Ovary (tissue), 10 donors: ENCODE measurements at regions of chr5 and their contacts with region 1.

Region 1: DNA sequence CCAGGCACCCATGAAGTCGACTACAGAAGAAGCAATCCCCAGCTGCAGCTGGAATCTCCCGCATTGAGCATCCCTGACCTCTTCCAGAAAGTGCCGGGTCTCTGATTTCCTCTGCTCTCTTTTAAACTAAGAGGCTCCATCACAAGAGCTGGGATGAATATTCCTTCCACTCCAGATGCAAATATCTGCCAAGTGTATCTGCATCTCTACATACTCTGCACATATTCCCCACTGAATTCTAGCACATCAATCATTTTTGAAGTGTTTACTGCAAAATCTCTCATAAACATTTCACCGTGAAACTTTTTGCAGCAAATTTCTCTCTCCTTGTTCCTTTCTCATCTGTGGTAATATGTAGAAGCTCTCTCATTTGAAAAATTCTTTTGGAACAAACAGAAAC is 161.5 kb downstream of the GABRB2 start:
- DNase-seq: no peak
- H3K4me3 ChIP-seq: no peak overlapping the region
- H3K27ac ChIP-seq: no peak overlapping the region
- H3K4me1 ChIP-seq: no peaks in the 10 kb centered on the region
- H3K27me3 ChIP-seq: no peaks in the 10 kb centered on the region
- CTCF ChIP-seq: no peak
- EP300 ChIP-seq: no peak
- POLR2A ChIP-seq: no peak

Region 2: DNA sequence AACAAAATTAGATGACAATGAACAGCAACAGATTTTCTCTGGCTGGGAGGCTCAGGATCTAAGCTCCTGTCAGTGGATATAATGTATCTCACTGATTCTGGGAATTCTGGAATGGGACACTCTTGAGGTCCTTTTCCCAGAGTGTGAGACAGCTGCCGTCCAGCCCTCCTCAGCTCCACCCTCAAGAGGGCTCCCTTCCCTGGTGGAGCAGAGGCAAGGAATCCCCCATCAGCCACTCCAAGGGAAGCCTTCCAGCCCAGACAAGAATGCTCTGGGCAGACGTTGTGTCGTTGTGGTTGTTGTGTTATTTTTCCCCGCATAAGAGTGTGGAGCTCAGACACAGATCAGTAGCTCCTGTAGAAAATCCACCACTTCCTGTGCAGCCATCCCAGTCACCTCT is 485.3 kb before region 1 on chr5:
- intact Hi-C with region 1: loop called in 1 of 4 experiments (anchors 5 kb)
- DNase-seq: no peak
- H3K4me3 ChIP-seq: no peak overlapping the region
- H3K27ac ChIP-seq: no peak overlapping the region
- H3K4me1 ChIP-seq: no peaks in the 10 kb centered on the region
- H3K27me3 ChIP-seq: no peaks in the 10 kb centered on the region
- CTCF ChIP-seq: no peak
- EP300 ChIP-seq: no peak
- POLR2A ChIP-seq: no peak

Region 3: DNA sequence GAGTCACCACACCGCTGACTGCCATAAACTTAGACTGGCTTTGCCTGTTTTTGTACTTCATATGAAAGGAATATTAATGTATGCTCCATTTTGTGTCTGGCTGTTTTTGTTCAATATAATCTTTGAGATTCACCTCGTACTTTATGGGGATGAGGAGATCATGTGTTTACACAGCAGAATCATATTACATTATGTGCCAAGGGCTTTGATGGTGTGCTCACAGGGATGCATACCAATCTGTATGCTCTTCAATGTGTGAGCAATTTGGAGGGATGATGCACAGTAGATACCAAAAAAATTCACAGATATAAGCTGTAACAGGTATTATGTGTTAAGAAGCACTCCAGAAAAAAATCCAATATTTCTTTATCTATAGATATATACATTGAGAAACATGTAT is 47.8 kb after region 1 on chr5:
- intact Hi-C with region 1: no loop called
- DNase-seq: no peak
- H3K4me3 ChIP-seq: no peak overlapping the region
- H3K27ac ChIP-seq: no peak overlapping the region
- H3K4me1 ChIP-seq: no peaks in the 10 kb centered on the region
- H3K27me3 ChIP-seq: no peaks in the 10 kb centered on the region
- CTCF ChIP-seq: no peak
- EP300 ChIP-seq: no peak
- POLR2A ChIP-seq: no peak

Region 4: GRCh38 chr5:161446655-161447054 is 61.6 kb after region 1 on chr5:
- intact Hi-C with region 1: no loop called
- DNase-seq: no peak
- H3K4me3 ChIP-seq: no peak overlapping the region
- H3K27ac ChIP-seq: no peak overlapping the region
- H3K4me1 ChIP-seq: no peaks in the 10 kb centered on the region
- H3K27me3 ChIP-seq: no peaks in the 10 kb centered on the region
- CTCF ChIP-seq: no peak
- EP300 ChIP-seq: no peak
- POLR2A ChIP-seq: no peak

Region 5: GRCh38 chr5:161790926-161791325 is 405.9 kb after region 1 on chr5:
- intact Hi-C with region 1: no loop called
- DNase-seq: no peak
- H3K4me3 ChIP-seq: no peak overlapping the region
- H3K27ac ChIP-seq: no peak overlapping the region
- H3K4me1 ChIP-seq: no peaks in the 10 kb centered on the region
- H3K27me3 ChIP-seq: no peaks in the 10 kb centered on the region
- CTCF ChIP-seq: no peak
- EP300 ChIP-seq: no peak
- POLR2A ChIP-seq: no peak